Caco-2 (cell line): ENCODE measurements at regions of chr12 and their contacts with region 1.

Region 1: GRCh38 chr12:59113831-59114615 is 193.7 kb upstream of the LRIG3 start:
- DNase-seq: peak; percentile 74 to 80
- H3K4me3 ChIP-seq: no peak overlapping the region
- H3K4me3 Mint-ChIP-seq: no peak overlapping the region
- H3K27ac Mint-ChIP-seq: no peak overlapping the region
- H3K4me1 ChIP-seq: no peaks in the 10 kb centered on the region
- H3K4me1 Mint-ChIP-seq: no peaks in the 10 kb centered on the region
- H3K27me3 ChIP-seq: no peaks in the 10 kb centered on the region
- H3K27me3 Mint-ChIP-seq: no peaks in the 10 kb centered on the region
- CTCF ChIP-seq: peak; percentile 88 to 89

Region 2: GRCh38 chr12:58787021-58787760 is 326.8 kb before region 1 on chr12:
- CTCF ChIA-PET with region 1: no interaction called
- POLR2A ChIA-PET with region 1: no interaction called
- intact Hi-C with region 1: no loop called
- DNase-seq: no peak
- H3K4me3 ChIP-seq: no peak overlapping the region
- H3K4me3 Mint-ChIP-seq: no peak overlapping the region
- H3K27ac Mint-ChIP-seq: no peak overlapping the region
- H3K4me1 ChIP-seq: no peaks in the 10 kb centered on the region
- H3K4me1 Mint-ChIP-seq: no peaks in the 10 kb centered on the region
- H3K27me3 ChIP-seq: no peaks in the 10 kb centered on the region
- H3K27me3 Mint-ChIP-seq: no peaks in the 10 kb centered on the region
- CTCF ChIP-seq: no peak

Region 3: DNA sequence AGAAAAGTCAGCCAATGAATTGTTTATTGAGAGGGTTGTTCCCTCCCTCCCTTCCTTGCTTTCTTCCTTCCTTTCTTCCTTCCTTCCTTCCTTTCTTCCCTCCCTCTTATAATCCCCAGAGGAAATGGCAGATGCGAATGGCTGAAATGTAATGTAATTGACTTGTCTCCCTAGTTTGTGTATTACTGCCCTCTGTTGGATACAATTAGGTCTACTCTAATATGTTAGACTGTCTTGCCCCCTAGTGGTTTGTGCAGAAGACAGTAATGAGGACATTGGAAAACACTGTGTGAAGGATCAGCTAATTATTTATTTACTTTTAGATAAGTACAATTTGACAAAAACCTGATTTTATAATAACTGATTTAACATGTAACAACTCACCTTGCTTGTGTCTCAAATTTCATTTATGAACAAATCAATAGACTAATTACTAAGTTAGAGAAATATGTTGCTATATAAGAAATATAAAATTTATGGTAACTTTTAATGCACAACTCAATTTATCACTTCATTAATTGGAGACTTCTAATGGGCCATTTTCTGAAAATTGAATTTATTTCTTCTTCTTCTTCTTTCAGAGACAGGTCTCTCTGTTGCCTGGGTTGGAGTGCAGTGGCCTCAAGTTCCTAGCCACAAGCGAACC is 36.1 kb after region 1 on chr12:
- CTCF ChIA-PET with region 1: no interaction called
- POLR2A ChIA-PET with region 1: no interaction called
- intact Hi-C with region 1: loop called (anchors 1 kb)
- DNase-seq: peak in 1 of 2 experiments; percentile 67
- H3K4me3 ChIP-seq: no peak overlapping the region
- H3K4me3 Mint-ChIP-seq: no peak overlapping the region
- H3K27ac Mint-ChIP-seq: no peak overlapping the region
- H3K4me1 ChIP-seq: no peaks in the 10 kb centered on the region
- H3K4me1 Mint-ChIP-seq: peaks cover 17% of the 10 kb centered on the region
- H3K27me3 ChIP-seq: no peaks in the 10 kb centered on the region
- H3K27me3 Mint-ChIP-seq: no peaks in the 10 kb centered on the region
- CTCF ChIP-seq: peak; percentile 86 to 95

Region 4: GRCh38 chr12:59164991-59165718 is 51.1 kb after region 1 on chr12:
- CTCF ChIA-PET with region 1: no interaction called
- POLR2A ChIA-PET with region 1: no interaction called
- intact Hi-C with region 1: loop called (anchors 1 kb)
- DNase-seq: peak in 1 of 2 experiments; percentile 32
- H3K4me3 ChIP-seq: no peak overlapping the region
- H3K4me3 Mint-ChIP-seq: no peak overlapping the region
- H3K27ac Mint-ChIP-seq: no peak overlapping the region
- H3K4me1 ChIP-seq: peaks cover 19% of the 10 kb centered on the region
- H3K4me1 Mint-ChIP-seq: peaks cover 14% of the 10 kb centered on the region
- H3K27me3 ChIP-seq: no peaks in the 10 kb centered on the region
- H3K27me3 Mint-ChIP-seq: no peaks in the 10 kb centered on the region
- CTCF ChIP-seq: peak in 1 of 2 experiments; percentile 31

Region 5: GRCh38 chr12:59736822-59737221 is 622.8 kb after region 1 on chr12:
- CTCF ChIA-PET with region 1: no interaction called
- POLR2A ChIA-PET with region 1: no interaction called
- intact Hi-C with region 1: no loop called
- DNase-seq: peak in 1 of 2 experiments; percentile 32
- H3K4me3 ChIP-seq: no peak overlapping the region
- H3K4me3 Mint-ChIP-seq: peak overlapping the region; percentile 11
- H3K27ac Mint-ChIP-seq: peak overlapping the region; percentile 20
- H3K4me1 ChIP-seq: peaks cover 3% of the 10 kb centered on the region; the same call in 1 of the 2 replicates
- H3K4me1 Mint-ChIP-seq: peaks cover 7% of the 10 kb centered on the region
- H3K27me3 ChIP-seq: no peaks in the 10 kb centered on the region
- H3K27me3 Mint-ChIP-seq: no peaks in the 10 kb centered on the region
- CTCF ChIP-seq: no peak